ENCODE measurements at regions of chr13 and their contacts with region 1.

Region 1: GRCh38 chr13:49300739-49301589 is 53.2 kb downstream of the CDADC1 start:
- DNase-seq: peak; percentile 58 to 61
- ATAC-seq: peak; percentile 89

Region 2: DNA sequence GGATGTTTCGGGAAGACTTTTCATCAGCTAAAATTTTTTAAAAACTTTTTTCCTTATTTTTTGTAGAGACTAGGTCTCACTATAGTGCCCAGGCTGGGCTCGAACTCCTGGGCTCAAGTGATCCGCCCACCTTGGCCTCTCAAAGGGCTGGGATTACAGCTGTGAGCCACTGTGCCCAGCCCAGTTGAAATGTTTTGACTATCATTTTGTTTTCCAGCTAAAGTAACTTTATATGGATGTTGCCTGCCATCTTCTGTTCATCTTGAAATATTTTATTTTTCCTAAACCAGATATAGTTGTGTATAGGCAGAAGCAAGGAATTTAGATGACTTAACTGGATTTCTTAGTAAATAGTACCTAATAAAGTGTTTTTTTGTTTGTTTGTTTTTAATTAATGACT is 135.9 kb after region 1 on chr13:
- intact Hi-C with region 1: loop called in 1 of 2 experiments (anchors 2 kb)
- DNase-seq: no peak
- ATAC-seq: peak; percentile 59

Region 3: GRCh38 chr13:49606747-49607648 is 306.0 kb after region 1 on chr13:
- intact Hi-C with region 1: loop called (anchors 5 to 10 kb)
- DNase-seq: peak; percentile 80 to 88
- ATAC-seq: peak; percentile 99

Measured in left colon (tissue), 2 donors.